HepG2 (cell line): ENCODE measurements at regions of chr14 and their contacts with region 1.

Region 1: DNA sequence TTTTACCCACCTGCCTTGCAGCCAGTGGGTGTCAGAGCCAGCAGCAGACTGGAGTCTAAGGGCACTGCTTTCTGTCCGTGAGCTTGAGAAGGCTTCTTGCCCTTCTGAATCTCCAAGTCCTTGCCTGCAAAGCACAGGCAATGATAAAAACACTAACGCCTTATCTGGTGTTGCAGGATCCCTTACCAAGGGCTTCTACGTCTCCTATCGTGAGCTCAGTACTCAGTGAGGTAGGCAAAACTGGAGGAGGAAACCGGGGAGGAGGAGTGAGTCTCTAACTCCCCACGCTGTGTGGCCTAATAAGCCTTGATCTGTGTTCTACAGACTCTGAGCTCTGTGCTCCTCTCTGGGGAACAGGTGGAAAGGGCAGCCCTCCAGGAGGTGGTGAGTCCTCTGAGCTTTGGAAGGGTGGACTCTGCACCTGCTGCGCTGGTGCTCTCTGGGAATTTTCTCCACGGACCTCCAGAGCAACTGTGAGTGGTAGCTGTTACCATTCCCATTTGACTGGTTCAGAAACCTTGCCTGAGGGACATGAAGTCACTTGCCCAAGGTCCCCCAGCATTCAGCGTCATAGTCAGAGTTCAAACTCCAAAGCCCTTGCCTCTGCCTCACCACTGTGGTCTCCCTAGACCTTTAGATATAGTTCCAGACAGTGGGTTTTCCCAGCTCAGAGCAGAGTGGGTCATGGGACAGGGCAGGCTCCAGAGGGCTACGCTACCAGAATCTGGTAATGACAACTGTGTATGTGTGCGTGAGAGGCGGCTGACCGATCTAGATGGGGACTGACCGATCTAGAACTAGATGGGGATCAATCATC is 7.0 kb upstream of the MARK3 start:
- DNase-seq: peak; percentile 52
- ATAC-seq: peak; percentile 83
- H3K4me3 ChIP-seq: peak overlapping the region; percentile 26 to 66 (median 45)
- H3K27ac ChIP-seq: peak overlapping the region; percentile 50
- H3K4me1 ChIP-seq: peaks cover 26% of the 10 kb centered on the region
- H3K27me3 ChIP-seq: peaks cover 1 to 4% of the 10 kb centered on the region in 2 experiments; a peak in 4 of 5 replicates
- CTCF ChIP-seq: no peak
- EP300 ChIP-seq: no peak
- POLR2A ChIP-seq: peak in 1 of 2 experiments; percentile 36; a peak in 2 of 4 replicates
- RAD21 ChIP-seq: no peak

Region 2: DNA sequence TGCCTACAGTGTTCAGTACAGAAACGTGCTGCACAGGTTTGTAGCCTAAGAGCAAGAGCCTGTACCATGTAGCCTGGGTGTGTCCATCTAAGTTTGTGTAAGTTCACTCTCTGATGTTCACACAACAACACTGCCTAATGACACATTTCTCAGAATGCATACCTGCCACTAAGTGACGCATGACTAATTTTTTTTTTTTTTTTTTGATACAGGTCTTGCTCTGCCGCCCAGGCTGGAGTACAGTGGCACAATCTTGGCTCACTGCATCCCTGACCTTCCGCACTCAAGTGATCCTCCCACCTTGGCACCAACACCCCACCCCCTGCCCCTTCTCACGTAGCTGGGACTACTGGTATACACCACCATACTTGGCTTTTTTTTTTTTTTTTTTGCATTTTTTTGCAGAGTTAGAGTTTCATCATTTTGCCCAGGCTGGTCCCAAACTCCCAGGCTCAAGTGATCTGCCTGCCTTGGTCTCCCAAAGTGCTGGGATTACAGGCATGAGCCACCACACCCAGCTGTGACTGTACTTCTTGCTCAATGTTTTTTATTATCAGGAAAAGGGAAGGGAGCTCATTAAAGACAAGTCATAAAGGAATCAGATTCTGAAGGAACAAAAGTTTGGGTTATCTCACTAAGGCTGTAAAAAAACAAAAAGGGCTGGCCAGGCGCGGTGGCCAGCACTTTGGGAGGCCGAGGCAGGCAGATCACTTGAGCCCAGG is 310.9 kb before region 1 on chr14:
- CTCF ChIA-PET with region 1: no interaction called
- POLR2A ChIA-PET with region 1: no interaction called
- in situ Hi-C with region 1: no loop called
- intact Hi-C with region 1: no loop called
- DNase-seq: no peak
- ATAC-seq: no peak
- H3K4me3 ChIP-seq: no peak overlapping the region
- H3K27ac ChIP-seq: no peak overlapping the region
- H3K4me1 ChIP-seq: peaks cover 61% of the 10 kb centered on the region
- H3K27me3 ChIP-seq: peaks cover 3 to 24% of the 10 kb centered on the region in 2 experiments; a peak in 3 of 5 replicates
- CTCF ChIP-seq: no peak
- EP300 ChIP-seq: no peak
- POLR2A ChIP-seq: no peak
- RAD21 ChIP-seq: no peak

Region 3: GRCh38 chr14:103346286-103346685 is 32.0 kb before region 1 on chr14:
- CTCF ChIA-PET with region 1: no interaction called
- POLR2A ChIA-PET with region 1: interaction called, 21 read pairs
- in situ Hi-C with region 1: no loop called
- intact Hi-C with region 1: no loop called
- DNase-seq: no peak
- ATAC-seq: no peak
- H3K4me3 ChIP-seq: no peak overlapping the region
- H3K27ac ChIP-seq: no peak overlapping the region
- H3K4me1 ChIP-seq: peaks cover 38% of the 10 kb centered on the region
- H3K27me3 ChIP-seq: no peaks in the 10 kb centered on the region
- CTCF ChIP-seq: no peak
- EP300 ChIP-seq: no peak
- POLR2A ChIP-seq: peak in 1 of 2 experiments; percentile 11; a peak in 1 of 4 replicates
- RAD21 ChIP-seq: no peak

Region 4: DNA sequence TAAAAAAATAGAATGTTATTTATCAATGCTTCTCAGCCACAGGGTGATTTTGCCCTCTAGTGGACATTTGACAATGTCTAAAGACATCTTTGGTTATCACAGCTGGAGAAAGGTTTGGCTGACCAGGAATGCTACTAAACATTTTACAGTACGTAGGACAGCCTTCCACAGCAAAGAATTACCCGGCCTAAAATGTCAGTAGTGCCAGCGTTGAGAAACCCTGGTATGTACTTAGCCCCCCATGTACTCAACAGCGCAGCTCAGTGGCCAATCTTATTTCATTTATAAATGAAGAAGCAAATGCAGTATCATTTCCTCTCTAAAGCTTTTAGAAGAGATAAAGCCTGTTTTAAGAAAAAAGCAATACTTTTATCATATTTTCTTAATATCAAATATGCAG is 12.8 kb after region 1 on chr14:
- CTCF ChIA-PET with region 1: no interaction called
- POLR2A ChIA-PET with region 1: interaction called, 14 read pairs
- in situ Hi-C with region 1: no loop called
- intact Hi-C with region 1: no loop called
- DNase-seq: peak; percentile 44
- ATAC-seq: peak; percentile 56
- H3K4me3 ChIP-seq: no peak overlapping the region
- H3K27ac ChIP-seq: no peak overlapping the region
- H3K4me1 ChIP-seq: peaks cover 63% of the 10 kb centered on the region
- H3K27me3 ChIP-seq: no peaks in the 10 kb centered on the region; a peak in 1 of 5 replicates
- CTCF ChIP-seq: peak; percentile 58
- EP300 ChIP-seq: no peak
- POLR2A ChIP-seq: no peak
- RAD21 ChIP-seq: no peak